ENCODE measurements at regions of chr20 and their contacts with region 1.

Region 1: GRCh38 chr20:49928401-49929141 is 7.6 kb upstream of the RNF114 start:
- DNase-seq: peak; percentile 90 to 96
- H3K4me3 ChIP-seq: no peak overlapping the region
- H3K4me3 Mint-ChIP-seq: no peak overlapping the region
- H3K27ac Mint-ChIP-seq: no peak overlapping the region
- H3K4me1 ChIP-seq: no peaks in the 10 kb centered on the region; the same call in 1 of the 2 replicates
- H3K4me1 Mint-ChIP-seq: peaks cover 2% of the 10 kb centered on the region
- H3K27me3 ChIP-seq: no peaks in the 10 kb centered on the region
- H3K27me3 Mint-ChIP-seq: no peaks in the 10 kb centered on the region
- CTCF ChIP-seq: peak; percentile 99

Region 2: DNA sequence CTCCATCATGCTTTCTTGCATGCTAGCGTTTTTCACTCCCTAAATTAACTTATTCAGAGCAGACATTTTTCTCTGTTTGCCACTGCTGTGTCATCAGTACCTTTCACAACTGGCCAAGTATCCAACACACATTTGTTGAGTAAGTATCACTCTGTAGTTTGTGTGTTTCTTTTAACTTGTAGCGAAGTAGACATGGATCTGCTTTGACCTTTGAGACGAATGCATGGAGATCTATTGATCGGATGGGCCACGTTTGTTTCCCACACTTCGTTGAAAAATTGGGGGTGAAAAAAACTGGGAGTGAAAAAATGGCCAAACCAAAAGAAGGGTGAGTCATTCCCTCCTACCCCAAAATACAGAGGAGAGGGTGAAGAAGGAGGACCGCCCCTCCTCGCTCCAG is 128.9 kb before region 1 on chr20:
- CTCF ChIA-PET with region 1: no interaction called
- POLR2A ChIA-PET with region 1: no interaction called
- intact Hi-C with region 1: no loop called
- DNase-seq: no peak
- H3K4me3 ChIP-seq: no peak overlapping the region
- H3K4me3 Mint-ChIP-seq: no peak overlapping the region
- H3K27ac Mint-ChIP-seq: no peak overlapping the region
- H3K4me1 ChIP-seq: peaks cover 16% of the 10 kb centered on the region
- H3K4me1 Mint-ChIP-seq: peaks cover 18% of the 10 kb centered on the region
- H3K27me3 ChIP-seq: no peaks in the 10 kb centered on the region
- H3K27me3 Mint-ChIP-seq: no peaks in the 10 kb centered on the region
- CTCF ChIP-seq: no peak

Region 3: DNA sequence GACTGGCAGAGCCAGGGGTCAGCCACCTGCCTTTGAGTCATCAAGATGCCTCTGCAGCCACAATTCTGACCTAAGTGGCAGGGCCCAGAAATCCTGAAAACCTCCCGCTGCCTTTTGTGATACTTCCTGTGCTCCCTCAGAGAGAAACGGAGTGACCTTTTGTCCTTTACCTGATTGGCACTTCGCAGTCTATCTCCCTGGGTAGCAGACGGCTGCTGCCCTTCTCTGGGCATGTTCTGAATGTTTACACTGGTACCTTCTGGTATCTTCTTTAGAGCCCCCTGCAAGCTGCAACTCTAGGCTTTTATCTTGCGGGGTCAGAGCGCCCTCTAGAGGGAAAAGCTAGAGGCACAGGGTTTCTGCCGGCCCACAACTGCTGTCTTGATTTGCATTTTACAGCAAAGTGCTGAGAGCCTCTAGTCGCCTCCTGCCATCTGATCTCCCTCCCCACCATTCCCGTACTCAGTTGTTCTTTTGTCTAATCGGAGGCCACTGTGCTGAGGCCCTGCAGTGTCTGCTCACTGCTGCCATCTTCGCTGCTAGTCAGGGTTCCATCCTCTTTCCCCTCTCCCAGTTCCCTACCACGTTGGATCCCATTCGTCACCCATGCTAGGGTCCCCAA is 40.1 kb before region 1 on chr20:
- CTCF ChIA-PET with region 1: interaction called, 9 read pairs
- POLR2A ChIA-PET with region 1: no interaction called
- intact Hi-C with region 1: loop called (anchors 1 kb)
- DNase-seq: peak; percentile 76 to 84
- H3K4me3 ChIP-seq: no peak overlapping the region
- H3K4me3 Mint-ChIP-seq: no peak overlapping the region
- H3K27ac Mint-ChIP-seq: peak overlapping the region; percentile 14
- H3K4me1 ChIP-seq: no peaks in the 10 kb centered on the region
- H3K4me1 Mint-ChIP-seq: peaks cover 15% of the 10 kb centered on the region
- H3K27me3 ChIP-seq: no peaks in the 10 kb centered on the region
- H3K27me3 Mint-ChIP-seq: no peaks in the 10 kb centered on the region
- CTCF ChIP-seq: peak; percentile 98 to 99

Region 4: DNA sequence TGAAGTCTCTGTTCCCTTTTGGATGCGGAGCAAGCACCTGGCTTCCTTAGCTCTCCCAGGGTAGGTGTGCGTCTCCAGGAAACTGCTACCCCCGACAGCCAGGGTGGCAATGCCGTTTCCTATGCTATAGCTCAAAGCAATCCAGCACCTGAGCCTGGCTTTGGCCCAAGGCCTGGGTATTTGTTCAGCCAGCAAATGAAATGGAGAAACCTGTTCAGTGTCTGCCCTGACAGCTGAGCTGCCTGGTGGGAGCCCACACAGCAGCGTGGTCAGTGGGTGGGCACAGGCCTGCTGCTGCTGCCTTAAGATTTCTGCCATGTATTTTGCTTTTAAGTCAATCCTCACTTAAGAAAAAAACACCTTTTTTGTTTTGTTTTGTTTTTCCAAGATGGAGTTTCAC is 27.0 kb before region 1 on chr20:
- CTCF ChIA-PET with region 1: no interaction called
- POLR2A ChIA-PET with region 1: interaction called, 3 read pairs
- intact Hi-C with region 1: loop called (anchors 2 kb)
- DNase-seq: peak in 1 of 2 experiments; percentile 30
- H3K4me3 ChIP-seq: no peak overlapping the region
- H3K4me3 Mint-ChIP-seq: no peak overlapping the region
- H3K27ac Mint-ChIP-seq: no peak overlapping the region
- H3K4me1 ChIP-seq: no peaks in the 10 kb centered on the region
- H3K4me1 Mint-ChIP-seq: no peaks in the 10 kb centered on the region
- H3K27me3 ChIP-seq: no peaks in the 10 kb centered on the region
- H3K27me3 Mint-ChIP-seq: no peaks in the 10 kb centered on the region
- CTCF ChIP-seq: no peak